Activated CD4-positive, alpha-beta memory T cell treated with anti-CD3 and anti-CD28 coated beads for 36 hours (primary cell): ENCODE measurements at regions of chr10 and their contacts with region 1.

Region 1: GRCh38 chr10:119872860-119873681 is 428 bp upstream of the MCMBP start:
- DNase-seq: peak; percentile 91
- H3K4me3 Mint-ChIP-seq: peak overlapping the region; percentile 80
- H3K27ac Mint-ChIP-seq: peak overlapping the region; percentile 87
- H3K4me1 Mint-ChIP-seq: peaks cover 31% of the 10 kb centered on the region
- H3K27me3 Mint-ChIP-seq: no peaks in the 10 kb centered on the region

Region 2: GRCh38 chr10:119502209-119502608 is 370.9 kb before region 1 on chr10:
- CTCF ChIA-PET with region 1: no interaction called
- POLR2A ChIA-PET with region 1: no interaction called
- intact Hi-C with region 1: loop called (anchors 5 kb)
- DNase-seq: peak; percentile 88
- H3K4me3 Mint-ChIP-seq: peak overlapping the region; percentile 59
- H3K27ac Mint-ChIP-seq: peak overlapping the region; percentile 99
- H3K4me1 Mint-ChIP-seq: peaks cover 83% of the 10 kb centered on the region
- H3K27me3 Mint-ChIP-seq: no peaks in the 10 kb centered on the region

Region 3: DNA sequence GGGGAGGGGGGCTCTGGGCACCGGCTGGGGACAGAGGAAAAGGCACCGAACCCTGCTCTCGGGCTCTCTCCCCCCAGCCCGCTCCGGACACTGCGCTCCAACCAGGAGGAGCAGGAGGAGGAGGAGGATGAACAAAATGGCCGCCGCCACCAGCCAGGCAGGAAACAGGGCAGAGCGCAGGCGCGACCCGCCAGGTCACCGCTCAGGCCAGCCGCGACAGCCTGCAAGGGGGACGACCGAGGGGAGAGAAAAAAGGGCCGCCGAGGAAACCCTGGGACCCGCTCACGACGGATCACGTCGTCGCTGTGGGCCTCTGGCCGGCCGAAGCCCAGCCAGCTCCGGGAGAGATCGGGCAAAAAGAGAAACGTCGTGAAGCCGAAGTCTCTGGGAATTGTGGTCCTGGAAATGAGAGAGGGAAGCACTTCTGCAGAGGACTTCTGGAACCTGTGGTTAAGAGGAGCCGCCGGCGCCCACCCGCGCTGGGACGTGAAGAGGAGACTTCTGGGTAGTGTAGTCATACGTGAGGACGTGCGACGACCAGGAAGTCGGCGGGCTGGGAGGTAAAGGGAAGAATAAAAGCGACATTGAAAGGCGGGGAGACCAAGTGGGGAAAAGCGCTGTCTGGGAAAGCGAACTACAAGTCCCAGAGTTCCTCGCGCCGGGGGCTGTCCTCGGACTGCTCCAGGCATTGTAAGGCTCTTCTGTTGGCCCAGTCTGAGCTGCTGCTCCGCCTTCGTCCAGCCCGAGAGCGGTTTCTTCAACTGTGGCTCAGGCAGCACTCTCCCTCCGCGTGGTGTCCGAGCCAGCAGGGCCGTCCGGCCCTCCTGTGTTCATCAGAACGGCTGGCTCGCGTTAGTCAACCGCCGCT is 276.3 kb before region 1 on chr10 and contains the start of gene TIAL1:
- CTCF ChIA-PET with region 1: no interaction called
- POLR2A ChIA-PET with region 1: interaction called, 3 read pairs
- intact Hi-C with region 1: loop called (anchors 2 kb)
- DNase-seq: peak; percentile 97
- H3K4me3 Mint-ChIP-seq: peak within 1 kb of the TSS; percentile 89
- H3K27ac Mint-ChIP-seq: peak within 1 kb of the TSS; percentile 97
- H3K4me1 Mint-ChIP-seq: peaks cover 42% of the 10 kb centered on the region
- H3K27me3 Mint-ChIP-seq: no peaks in the 10 kb centered on the region
- total RNA-seq, gene TIAL1: 177 TPM

Region 4: DNA sequence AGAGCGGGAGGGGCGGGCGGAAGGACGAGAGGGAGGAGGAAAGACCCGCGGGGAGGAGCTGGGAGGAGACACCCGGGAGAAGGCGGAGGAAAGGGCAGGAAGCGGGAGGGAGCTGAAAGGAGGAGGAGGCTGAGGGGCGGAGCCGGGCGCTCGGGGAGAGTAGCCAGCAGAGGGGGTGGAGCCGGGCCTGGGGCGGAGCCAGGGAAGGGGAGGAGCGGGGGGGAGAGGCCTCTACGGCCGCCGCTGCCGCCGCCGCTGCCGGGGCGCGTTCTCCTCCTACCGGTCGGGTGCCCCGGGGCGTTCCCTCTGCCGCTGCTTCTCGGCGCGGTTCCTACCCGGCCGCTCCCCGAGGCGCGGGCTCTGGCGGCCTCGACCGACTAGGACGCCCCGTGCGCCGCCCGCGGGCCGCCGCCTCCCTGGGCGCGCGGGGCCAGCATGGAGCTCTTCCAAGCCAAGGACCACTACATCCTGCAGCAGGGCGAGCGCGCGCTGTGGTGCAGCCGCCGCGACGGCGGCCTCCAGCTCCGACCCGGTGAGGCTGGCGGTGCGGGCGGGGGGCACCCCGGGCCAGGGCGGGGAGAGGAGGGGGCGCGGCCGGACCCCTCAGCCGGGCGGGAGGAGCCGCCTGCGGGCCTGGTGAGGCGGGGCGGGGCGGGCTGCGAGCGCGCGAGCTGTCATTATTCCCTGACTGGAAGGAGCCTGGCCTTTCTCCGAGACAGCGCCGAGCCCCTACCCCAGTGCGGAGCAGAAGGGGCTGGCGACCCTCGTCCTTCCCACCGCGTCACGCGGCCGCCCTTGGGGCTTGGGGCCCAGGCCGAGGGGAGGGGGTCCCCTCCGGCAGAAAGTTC is 147.0 kb before region 1 on chr10 and contains the start of gene INPP5F:
- CTCF ChIA-PET with region 1: interaction called, 9 read pairs
- POLR2A ChIA-PET with region 1: interaction called, 10 read pairs
- intact Hi-C with region 1: no loop called
- DNase-seq: peak; percentile 100
- H3K4me3 Mint-ChIP-seq: peak within 1 kb of the TSS; percentile 91
- H3K27ac Mint-ChIP-seq: peak within 1 kb of the TSS; percentile 76
- H3K4me1 Mint-ChIP-seq: peaks cover 42% of the 10 kb centered on the region
- H3K27me3 Mint-ChIP-seq: no peaks in the 10 kb centered on the region
- total RNA-seq, gene INPP5F: 12.8 to 13.6 TPM

Region 5: DNA sequence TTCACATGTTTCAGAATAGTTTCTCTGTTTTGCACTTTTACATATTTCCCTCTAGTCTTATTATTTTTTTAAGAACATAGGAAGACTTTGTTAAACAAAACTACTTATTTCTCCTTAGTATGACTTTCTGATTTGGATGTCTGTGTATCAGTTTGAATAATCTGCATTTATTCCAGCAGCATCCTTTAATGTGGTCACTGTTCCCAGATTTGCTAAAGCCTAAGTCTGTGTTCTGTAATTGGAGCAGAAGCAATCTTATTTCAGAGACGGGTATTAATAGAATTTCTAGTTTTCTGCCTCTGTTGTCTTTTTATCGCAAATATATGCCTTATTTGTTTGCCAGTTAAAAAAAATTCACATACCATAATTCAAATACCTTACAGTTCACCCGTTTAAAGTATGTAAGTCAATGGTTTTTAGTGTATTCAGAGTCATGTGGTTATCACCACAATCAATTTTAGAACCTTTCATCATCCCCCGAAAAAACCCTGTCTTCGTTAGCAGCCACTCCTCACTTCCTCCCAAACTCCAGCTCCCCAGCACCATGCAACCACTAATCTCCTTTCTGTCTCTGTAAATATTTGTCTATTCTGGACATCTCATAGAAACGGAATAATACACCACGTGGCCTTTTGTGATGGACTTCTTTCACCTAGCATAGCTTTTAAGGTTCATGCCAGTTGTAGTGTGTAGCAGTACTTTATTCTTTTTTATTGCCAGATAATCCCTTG is 88.6 kb before region 1 on chr10:
- CTCF ChIA-PET with region 1: no interaction called
- POLR2A ChIA-PET with region 1: no interaction called
- intact Hi-C with region 1: no loop called
- DNase-seq: no peak
- H3K4me3 Mint-ChIP-seq: no peak overlapping the region
- H3K27ac Mint-ChIP-seq: no peak overlapping the region
- H3K4me1 Mint-ChIP-seq: peaks cover 17% of the 10 kb centered on the region
- H3K27me3 Mint-ChIP-seq: no peaks in the 10 kb centered on the region

Region 6: GRCh38 chr10:119834188-119834587 is 38.9 kb before region 1 on chr10:
- CTCF ChIA-PET with region 1: interaction called, 3 read pairs
- POLR2A ChIA-PET with region 1: interaction called, 6 read pairs
- intact Hi-C with region 1: loop called (anchors 1 kb)
- DNase-seq: no peak
- H3K4me3 Mint-ChIP-seq: no peak overlapping the region
- H3K27ac Mint-ChIP-seq: peak overlapping the region; percentile 52
- H3K4me1 Mint-ChIP-seq: peaks cover 43% of the 10 kb centered on the region
- H3K27me3 Mint-ChIP-seq: no peaks in the 10 kb centered on the region

Region 7: DNA sequence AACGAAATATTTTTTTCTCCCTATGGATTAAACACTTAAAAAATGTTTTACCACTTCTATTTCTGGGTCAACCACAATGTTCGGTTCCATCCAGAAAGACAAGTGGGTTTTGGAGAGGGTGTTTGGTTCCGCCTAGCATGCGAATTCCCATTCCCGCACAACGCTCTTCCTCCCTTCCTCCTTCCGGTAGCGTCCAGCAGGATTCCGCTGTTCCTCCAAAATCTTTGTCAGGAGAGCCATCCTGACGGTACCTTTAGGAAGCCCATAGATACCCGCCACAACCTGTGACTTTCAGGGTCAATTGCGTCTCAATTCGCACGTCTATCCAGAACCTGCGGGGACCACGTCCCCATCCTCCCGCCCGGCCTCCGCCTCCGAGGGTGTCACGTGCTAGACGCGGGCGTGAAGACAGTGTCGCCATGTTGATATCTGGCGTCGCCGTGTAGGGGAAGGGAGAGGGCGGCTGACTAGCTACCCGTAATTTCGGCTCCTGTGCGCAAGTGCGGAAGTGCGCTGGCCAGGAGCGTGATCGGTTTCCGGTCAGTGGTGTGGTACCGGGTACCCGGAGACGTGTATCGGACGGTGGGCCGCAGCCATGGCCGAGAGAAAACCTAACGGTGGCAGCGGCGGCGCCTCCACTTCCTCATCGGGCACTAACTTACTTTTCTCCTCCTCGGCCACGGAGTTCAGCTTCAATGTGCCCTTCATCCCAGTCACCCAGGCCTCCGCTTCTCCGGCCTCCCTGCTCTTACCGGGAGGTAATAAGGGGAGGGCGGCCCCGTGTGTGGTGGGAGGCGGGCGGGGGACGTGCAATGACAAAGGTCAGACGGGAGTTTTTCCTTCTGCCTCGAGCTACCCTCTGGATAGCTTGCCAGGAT is 19.4 kb after region 1 on chr10 and contains the start of gene SEC23IP:
- CTCF ChIA-PET with region 1: interaction called, 8 read pairs
- POLR2A ChIA-PET with region 1: interaction called, 36 read pairs
- intact Hi-C with region 1: loop called (anchors 1 kb)
- DNase-seq: peak; percentile 96
- H3K4me3 Mint-ChIP-seq: peak within 1 kb of the TSS; percentile 98
- H3K27ac Mint-ChIP-seq: peak within 1 kb of the TSS; percentile 97
- H3K4me1 Mint-ChIP-seq: peaks cover 39% of the 10 kb centered on the region
- H3K27me3 Mint-ChIP-seq: no peaks in the 10 kb centered on the region
- total RNA-seq, gene SEC23IP: 62.4 to 63.6 TPM

Region 8: GRCh38 chr10:120314442-120314841 is 441.4 kb after region 1 on chr10:
- CTCF ChIA-PET with region 1: no interaction called
- POLR2A ChIA-PET with region 1: no interaction called
- intact Hi-C with region 1: no loop called
- DNase-seq: no peak
- H3K4me3 Mint-ChIP-seq: no peak overlapping the region
- H3K27ac Mint-ChIP-seq: no peak overlapping the region
- H3K4me1 Mint-ChIP-seq: no peaks in the 10 kb centered on the region
- H3K27me3 Mint-ChIP-seq: peaks cover 8% of the 10 kb centered on the region